Transverse colon (tissue), 4 donors: ENCODE measurements at regions of chr22 and their contacts with region 1.

Region 1: DNA sequence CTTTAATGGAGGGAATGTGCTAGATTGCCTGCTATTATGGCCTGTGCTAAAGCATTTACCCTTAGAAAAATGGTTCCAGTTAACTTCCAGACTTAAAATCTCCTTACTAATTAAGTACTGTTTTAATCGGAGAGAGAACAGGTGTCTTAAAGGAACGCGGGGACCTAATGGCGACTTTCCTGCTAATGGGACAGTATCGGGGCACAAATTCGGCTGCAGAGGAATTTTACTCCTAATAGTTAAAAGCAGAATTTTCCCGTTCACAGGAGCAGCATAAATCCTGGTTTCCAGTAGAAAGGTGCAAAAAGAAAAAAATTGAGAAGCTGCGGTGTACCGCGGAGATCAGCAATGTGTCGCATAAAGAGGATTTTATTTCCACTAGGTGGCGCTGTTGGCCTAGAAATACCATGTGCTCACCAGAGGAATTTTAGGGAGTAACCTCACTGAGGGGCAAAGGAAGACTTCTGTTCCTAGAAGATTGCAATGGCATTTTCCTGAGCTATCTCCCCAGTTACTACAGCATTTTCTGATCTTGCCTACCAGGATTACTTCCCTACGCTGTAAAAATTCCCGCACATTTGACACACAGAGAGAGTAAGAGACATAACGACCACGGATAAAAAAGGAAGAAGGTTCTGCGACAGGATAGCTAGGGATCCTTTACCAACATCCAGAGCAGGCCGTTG is 44.5 kb downstream of the ZNF280B start:
- DNase-seq: peak; percentile 44
- H3K4me3 ChIP-seq: no peak overlapping the region
- H3K27ac ChIP-seq: no peak overlapping the region
- H3K4me1 ChIP-seq: peaks cover 0 to 3% (median 0%) of the 10 kb centered on the region in 4 donors
- H3K27me3 ChIP-seq: peaks cover 36% of the 10 kb centered on the region
- CTCF ChIP-seq: peak; percentile 67 to 78 (median 72)
- EP300 ChIP-seq: no peak
- POLR2A ChIP-seq: no peak

Region 2: DNA sequence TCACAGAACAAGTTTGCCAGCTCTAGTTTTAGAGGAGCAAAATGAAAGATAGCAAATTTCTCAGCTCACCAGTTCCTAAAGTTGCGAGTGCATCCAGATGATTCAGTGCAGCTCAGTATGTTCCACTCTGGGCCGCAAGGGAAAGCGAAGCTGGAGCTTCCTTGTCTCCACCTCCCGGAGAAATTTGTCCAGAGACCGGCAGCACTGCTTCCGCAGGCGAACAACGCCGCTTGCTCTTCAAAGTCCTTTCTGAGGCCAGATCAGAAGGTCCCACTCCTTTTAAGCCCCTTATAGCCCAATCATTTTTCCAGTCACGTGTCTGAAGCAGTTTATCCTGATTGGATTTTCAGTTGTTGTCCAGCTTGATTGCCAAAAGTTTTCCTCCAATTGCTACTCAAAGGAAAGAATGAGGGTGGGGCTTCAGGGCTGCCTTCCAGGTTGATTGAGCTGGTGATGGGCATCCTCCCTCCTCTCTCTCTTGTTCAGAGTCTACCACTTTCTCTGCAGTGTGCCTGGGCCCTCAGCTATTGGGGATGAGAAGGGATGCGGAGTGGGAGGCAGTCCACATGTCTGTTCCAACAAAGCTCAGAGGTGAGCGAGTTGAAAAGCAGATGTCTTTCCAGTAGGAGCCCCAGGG is 56.1 kb after region 1 on chr22 and contains the start of gene ZNF280A:
- in situ Hi-C with region 1: no loop called
- intact Hi-C with region 1: no loop called
- DNase-seq: no peak
- H3K4me3 ChIP-seq: no peak within 1 kb of the TSS
- H3K27ac ChIP-seq: no peak within 1 kb of the TSS
- H3K4me1 ChIP-seq: no peaks in the 10 kb centered on the region
- H3K27me3 ChIP-seq: peaks cover 17% of the 10 kb centered on the region
- CTCF ChIP-seq: no peak
- EP300 ChIP-seq: no peak
- POLR2A ChIP-seq: no peak
- total RNA-seq, gene ZNF280A: not detected

Region 3: GRCh38 chr22:22593964-22594656 is 130.1 kb after region 1 on chr22:
- in situ Hi-C with region 1: loop called in 1 of 4 experiments (anchors 25 kb)
- intact Hi-C with region 1: no loop called
- DNase-seq: peak; percentile 38
- H3K4me3 ChIP-seq: no peak overlapping the region
- H3K27ac ChIP-seq: no peak overlapping the region
- H3K4me1 ChIP-seq: no peaks in the 10 kb centered on the region
- H3K27me3 ChIP-seq: peaks cover 5% of the 10 kb centered on the region
- CTCF ChIP-seq: peak; percentile 31 to 61 (median 43)
- EP300 ChIP-seq: no peak
- POLR2A ChIP-seq: no peak